Activated CD4-positive, alpha-beta memory T cell treated with anti-CD3 and anti-CD28 coated beads for 36 hours (primary cell): ENCODE measurements at regions of chr4 and their contacts with region 1.

Region 1: DNA sequence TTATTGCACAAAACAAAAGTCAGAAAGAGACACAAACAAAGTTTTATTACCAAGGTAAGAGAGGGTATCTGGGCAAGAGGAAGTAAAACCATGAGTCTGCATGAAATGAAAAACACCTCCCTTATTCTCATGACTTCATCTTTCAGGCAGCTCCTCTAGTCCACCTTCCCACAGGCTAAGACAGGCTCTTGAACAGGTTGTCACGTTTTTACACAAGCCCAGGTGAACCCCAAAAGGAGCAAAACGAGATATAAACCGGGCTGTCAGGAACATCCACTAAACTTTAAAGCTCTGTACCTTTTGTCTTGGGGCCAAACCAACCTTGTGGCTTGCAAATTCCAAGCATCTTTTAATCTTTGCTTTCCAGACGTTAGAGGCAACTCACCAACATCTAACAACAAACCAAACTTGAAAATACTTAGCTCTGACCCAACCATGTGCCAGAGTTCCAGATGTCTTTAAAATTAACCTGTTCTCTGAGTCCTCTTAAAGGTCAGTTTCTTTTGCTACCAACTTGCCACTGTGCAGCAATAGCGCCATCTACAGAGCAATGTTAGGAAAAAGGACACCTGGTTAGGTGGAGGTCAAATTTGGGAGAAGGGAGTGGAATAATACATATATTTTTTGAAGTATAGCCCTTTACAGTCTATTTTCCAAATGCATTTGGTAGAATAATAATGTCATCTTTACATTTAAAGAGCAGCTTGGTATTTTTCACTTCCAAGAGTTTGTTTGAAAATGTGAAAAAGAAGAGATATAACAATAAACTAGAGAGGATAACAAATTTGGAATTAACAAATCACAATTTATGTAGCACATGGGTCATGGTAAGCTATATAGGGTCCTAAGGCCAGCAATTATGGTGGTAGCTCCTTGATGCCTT is 73.1 kb downstream of the QRFPR start:
- DNase-seq: peak; percentile 58
- H3K4me3 Mint-ChIP-seq: peak overlapping the region; percentile 7
- H3K27ac Mint-ChIP-seq: peak overlapping the region; percentile 75
- H3K4me1 Mint-ChIP-seq: peaks cover 18% of the 10 kb centered on the region
- H3K27me3 Mint-ChIP-seq: no peaks in the 10 kb centered on the region

Region 2: GRCh38 chr4:120066517-120067340 is 1241.0 kb before region 1 on chr4 and contains the start of gene MAD2L1:
- CTCF ChIA-PET with region 1: no interaction called
- POLR2A ChIA-PET with region 1: no interaction called
- intact Hi-C with region 1: loop called (anchors 5 kb)
- DNase-seq: peak; percentile 99
- H3K4me3 Mint-ChIP-seq: peak within 1 kb of the TSS; percentile 98
- H3K27ac Mint-ChIP-seq: peak within 1 kb of the TSS; percentile 99
- H3K4me1 Mint-ChIP-seq: peaks cover 58% of the 10 kb centered on the region
- H3K27me3 Mint-ChIP-seq: no peaks in the 10 kb centered on the region
- total RNA-seq, gene MAD2L1: 92.0 to 96.6 TPM

Region 3: GRCh38 chr4:120718979-120719566 is 588.6 kb before region 1 on chr4:
- CTCF ChIA-PET with region 1: interaction called, 4 read pairs
- POLR2A ChIA-PET with region 1: no interaction called
- intact Hi-C with region 1: loop called (anchors 2 kb)
- DNase-seq: peak; percentile 26
- H3K4me3 Mint-ChIP-seq: no peak overlapping the region
- H3K27ac Mint-ChIP-seq: no peak overlapping the region
- H3K4me1 Mint-ChIP-seq: no peaks in the 10 kb centered on the region
- H3K27me3 Mint-ChIP-seq: peaks cover 5% of the 10 kb centered on the region

Region 4: DNA sequence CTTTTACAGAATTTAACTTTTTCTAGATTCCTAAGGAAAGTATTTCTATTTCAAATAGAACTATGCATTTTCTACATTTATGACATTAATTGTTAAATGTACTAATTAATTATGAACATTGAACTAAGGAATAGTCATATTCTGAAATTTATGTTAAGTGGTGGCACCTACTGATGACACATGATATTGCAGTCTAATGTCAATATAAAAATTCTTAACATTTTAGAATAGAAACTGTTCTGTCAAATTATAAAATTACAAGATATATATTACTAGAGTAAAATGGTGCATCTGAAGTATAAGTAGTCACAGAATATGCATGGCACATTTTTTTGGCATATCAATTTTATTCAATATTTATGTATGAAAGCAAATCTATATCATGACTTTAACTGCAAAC is 195.2 kb before region 1 on chr4:
- CTCF ChIA-PET with region 1: interaction called, 13 read pairs
- POLR2A ChIA-PET with region 1: no interaction called
- intact Hi-C with region 1: no loop called
- DNase-seq: no peak
- H3K4me3 Mint-ChIP-seq: no peak overlapping the region
- H3K27ac Mint-ChIP-seq: no peak overlapping the region
- H3K4me1 Mint-ChIP-seq: peaks cover 12% of the 10 kb centered on the region
- H3K27me3 Mint-ChIP-seq: no peaks in the 10 kb centered on the region

Region 5: DNA sequence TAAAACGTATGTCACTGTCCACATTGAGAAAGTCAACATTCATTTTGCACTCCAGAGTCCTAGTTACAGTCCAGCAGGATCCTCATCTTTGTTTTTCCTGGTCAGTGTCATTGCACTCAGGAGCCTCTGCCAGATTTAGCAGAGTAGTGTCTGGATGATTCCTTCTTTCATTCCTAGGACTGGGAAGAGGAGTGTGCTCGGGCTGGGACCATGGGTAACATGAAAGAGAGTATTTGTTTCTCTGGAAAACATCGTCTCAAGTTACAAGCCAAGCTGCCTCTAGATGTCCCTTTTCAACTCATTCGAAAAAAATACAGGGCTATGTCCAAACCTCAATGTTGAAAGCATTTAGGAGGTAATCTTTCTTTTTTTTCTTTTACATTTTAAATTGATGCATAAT is 73.7 kb before region 1 on chr4:
- CTCF ChIA-PET with region 1: no interaction called
- POLR2A ChIA-PET with region 1: no interaction called
- intact Hi-C with region 1: no loop called
- DNase-seq: no peak
- H3K4me3 Mint-ChIP-seq: no peak overlapping the region
- H3K27ac Mint-ChIP-seq: no peak overlapping the region
- H3K4me1 Mint-ChIP-seq: peaks cover 16% of the 10 kb centered on the region
- H3K27me3 Mint-ChIP-seq: no peaks in the 10 kb centered on the region

Region 6: DNA sequence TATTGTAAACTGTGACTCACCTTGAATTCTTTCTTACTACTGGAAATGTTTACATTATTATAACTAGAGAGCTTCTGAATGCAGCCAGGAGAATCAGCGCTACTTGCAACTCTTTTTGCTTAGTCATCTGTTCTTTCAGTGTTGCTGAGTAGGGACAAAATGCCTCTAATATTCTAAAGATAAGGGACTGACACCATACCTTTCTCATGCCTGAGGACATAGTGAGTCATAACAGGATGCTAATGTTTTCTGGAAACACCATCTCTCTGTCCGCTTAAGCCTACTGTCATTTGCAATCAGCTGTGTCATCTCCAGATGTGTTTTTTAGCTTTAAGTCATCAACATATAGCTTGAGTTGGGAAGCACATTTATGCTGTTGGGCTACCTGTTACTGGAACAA is 35.2 kb before region 1 on chr4:
- CTCF ChIA-PET with region 1: interaction called, 25 read pairs
- POLR2A ChIA-PET with region 1: no interaction called
- intact Hi-C with region 1: no loop called
- DNase-seq: no peak
- H3K4me3 Mint-ChIP-seq: no peak overlapping the region
- H3K27ac Mint-ChIP-seq: peak overlapping the region; percentile 56
- H3K4me1 Mint-ChIP-seq: peaks cover 16% of the 10 kb centered on the region
- H3K27me3 Mint-ChIP-seq: peaks cover 7% of the 10 kb centered on the region